Activated B cell treated with CpG ODN at 0.5 μM for 24 hours (primary cell): ENCODE measurements at regions of chr9 and their contacts with region 1.

Region 1: GRCh38 chr9:32589083-32589723 is 16.2 kb upstream of the NDUFB6 start:
- DNase-seq: no peak
- ATAC-seq: no peak
- H3K4me3 Mint-ChIP-seq: no peak overlapping the region
- H3K27ac Mint-ChIP-seq: no peak overlapping the region
- H3K4me1 Mint-ChIP-seq: no peaks in the 10 kb centered on the region
- H3K27me3 Mint-ChIP-seq: peaks cover 23% of the 10 kb centered on the region
- CTCF ChIP-seq: no peak

Region 2: GRCh38 chr9:32371279-32371678 is 217.9 kb before region 1 on chr9:
- CTCF ChIA-PET with region 1: no interaction called
- POLR2A ChIA-PET with region 1: no interaction called
- intact Hi-C with region 1: no loop called
- DNase-seq: no peak
- ATAC-seq: no peak
- H3K4me3 Mint-ChIP-seq: no peak overlapping the region
- H3K27ac Mint-ChIP-seq: no peak overlapping the region
- H3K4me1 Mint-ChIP-seq: no peaks in the 10 kb centered on the region
- H3K27me3 Mint-ChIP-seq: peaks cover 6% of the 10 kb centered on the region
- CTCF ChIP-seq: no peak

Region 3: DNA sequence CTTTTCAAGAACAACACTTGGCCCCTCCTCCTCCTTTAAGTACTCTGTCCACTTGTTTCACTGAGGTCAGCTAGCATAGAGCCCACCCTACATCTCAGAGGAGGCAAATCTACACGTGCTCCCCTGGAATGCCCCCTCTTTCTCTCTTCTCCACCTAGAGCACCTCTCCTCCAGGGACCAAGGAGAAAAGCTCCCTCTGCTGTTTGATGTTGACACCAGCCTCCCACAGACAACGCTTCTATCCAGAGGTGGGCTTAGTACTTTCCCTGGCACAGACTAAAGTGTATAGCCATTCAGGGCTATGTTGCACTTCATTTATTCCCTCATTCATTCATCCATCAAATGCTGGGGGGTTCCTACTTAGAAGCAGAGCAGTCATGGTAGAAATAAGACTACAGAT is 114.4 kb after region 1 on chr9:
- CTCF ChIA-PET with region 1: no interaction called
- POLR2A ChIA-PET with region 1: no interaction called
- intact Hi-C with region 1: loop called (anchors 1 kb)
- DNase-seq: no peak
- ATAC-seq: no peak
- H3K4me3 Mint-ChIP-seq: no peak overlapping the region
- H3K27ac Mint-ChIP-seq: no peak overlapping the region
- H3K4me1 Mint-ChIP-seq: no peaks in the 10 kb centered on the region
- H3K27me3 Mint-ChIP-seq: no peaks in the 10 kb centered on the region
- CTCF ChIP-seq: no peak

Region 4: DNA sequence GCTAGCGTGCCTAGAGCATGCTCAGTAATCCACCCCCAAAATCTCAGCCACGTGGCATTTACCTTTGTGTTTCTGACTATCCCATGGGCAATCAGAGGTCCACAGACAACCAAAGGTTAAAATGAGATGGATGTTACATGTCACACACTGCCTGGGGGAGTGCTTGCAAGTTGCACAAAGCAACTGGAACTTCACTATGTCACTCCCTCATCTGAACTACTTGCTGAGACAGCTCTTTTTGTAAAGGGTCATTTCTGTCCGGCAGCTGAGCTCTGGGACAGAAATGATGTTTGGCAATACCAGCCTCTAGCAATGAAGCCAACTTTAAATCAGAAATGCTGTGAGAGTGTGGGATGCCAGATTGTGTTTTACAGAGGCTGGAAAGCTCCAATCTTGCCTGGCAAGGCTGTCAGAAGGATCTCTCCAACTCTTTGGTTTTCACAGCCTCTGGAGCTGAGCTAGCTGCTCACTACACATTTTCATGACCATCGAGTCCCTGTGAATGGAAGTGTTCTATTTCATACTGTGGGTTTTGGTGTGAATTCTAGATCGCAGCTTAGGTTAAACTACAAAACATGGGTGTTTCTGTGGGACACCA is 127.8 kb after region 1 on chr9:
- CTCF ChIA-PET with region 1: no interaction called
- POLR2A ChIA-PET with region 1: no interaction called
- intact Hi-C with region 1: no loop called
- DNase-seq: no peak
- ATAC-seq: no peak
- H3K4me3 Mint-ChIP-seq: no peak overlapping the region
- H3K27ac Mint-ChIP-seq: no peak overlapping the region
- H3K4me1 Mint-ChIP-seq: no peaks in the 10 kb centered on the region
- H3K27me3 Mint-ChIP-seq: no peaks in the 10 kb centered on the region
- CTCF ChIP-seq: no peak